ENCODE measurements at regions of chr17 and their contacts with region 1.

Region 1: DNA sequence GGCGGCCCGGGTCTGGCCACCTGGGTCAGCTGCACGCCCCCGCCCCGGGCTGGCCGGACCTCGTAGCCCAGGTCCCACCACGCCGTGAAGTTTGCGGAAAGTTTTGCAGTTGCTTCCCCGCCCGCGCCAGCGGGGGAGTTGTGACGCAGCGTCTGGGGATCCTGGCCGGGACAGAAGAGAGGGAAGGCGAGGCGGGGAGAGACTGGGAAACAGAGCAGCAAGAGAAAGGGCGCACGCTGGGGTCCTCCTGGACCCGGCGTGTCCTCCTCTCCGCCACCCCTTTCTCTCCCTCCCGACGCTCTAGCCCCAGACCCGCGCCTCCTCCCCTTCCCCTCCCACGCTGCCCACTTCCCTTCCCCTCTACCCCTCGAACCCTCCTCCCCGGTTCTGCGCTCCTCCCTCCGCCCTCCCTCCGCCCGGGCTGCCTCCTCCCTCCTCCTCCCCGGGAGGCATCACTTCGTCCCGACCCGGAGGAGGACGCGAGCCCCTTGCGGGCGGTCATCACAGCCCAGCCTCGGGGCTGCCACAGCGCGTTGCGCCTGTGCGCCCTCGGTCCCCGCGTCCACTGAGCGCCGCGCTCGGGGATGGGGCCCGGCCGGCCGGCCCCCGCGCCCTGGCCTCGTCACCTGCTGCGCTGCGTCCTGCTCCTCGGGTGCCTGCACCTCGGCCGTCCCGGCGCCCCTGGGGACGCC is at the start of gene MRC2:
- DNase-seq: peak in 1 of 2 donors; percentile 90
- H3K4me3 ChIP-seq: peak within 1 kb of the TSS; percentile 68 to 78
- H3K27ac ChIP-seq: peak within 1 kb of the TSS; percentile 83 to 98
- H3K4me1 ChIP-seq: peaks cover 3 to 13% of the 10 kb centered on the region in 2 donors
- H3K27me3 ChIP-seq: no peaks in the 10 kb centered on the region
- CTCF ChIP-seq: no peak
- total RNA-seq, gene MRC2: 147 TPM

Region 2: GRCh38 chr17:62637809-62638208 is 10.4 kb after region 1 on chr17:
- intact Hi-C with region 1: no loop called
- DNase-seq: no peak
- H3K4me3 ChIP-seq: no peak overlapping the region
- H3K27ac ChIP-seq: no peak overlapping the region
- H3K4me1 ChIP-seq: peaks cover 2 to 12% of the 10 kb centered on the region in 2 donors
- H3K27me3 ChIP-seq: no peaks in the 10 kb centered on the region
- CTCF ChIP-seq: no peak

Region 3: GRCh38 chr17:62652251-62653001 is 25.1 kb after region 1 on chr17:
- intact Hi-C with region 1: loop called (anchors 1 kb)
- DNase-seq: peak; percentile 42 to 90
- H3K4me3 ChIP-seq: peak overlapping the region; percentile 62 to 69
- H3K27ac ChIP-seq: peak overlapping the region; percentile 67 to 72
- H3K4me1 ChIP-seq: peaks cover 14 to 29% of the 10 kb centered on the region in 2 donors
- H3K27me3 ChIP-seq: no peaks in the 10 kb centered on the region
- CTCF ChIP-seq: no peak

Region 4: GRCh38 chr17:62680541-62681052 is 53.2 kb after region 1 on chr17:
- intact Hi-C with region 1: loop called (anchors 5 kb)
- DNase-seq: no peak
- H3K4me3 ChIP-seq: no peak overlapping the region
- H3K27ac ChIP-seq: peak overlapping the region in 1 of 2 donors; percentile 50
- H3K4me1 ChIP-seq: no peaks in the 10 kb centered on the region
- H3K27me3 ChIP-seq: no peaks in the 10 kb centered on the region
- CTCF ChIP-seq: peak in 1 of 3 experiments; percentile 27

Region 5: DNA sequence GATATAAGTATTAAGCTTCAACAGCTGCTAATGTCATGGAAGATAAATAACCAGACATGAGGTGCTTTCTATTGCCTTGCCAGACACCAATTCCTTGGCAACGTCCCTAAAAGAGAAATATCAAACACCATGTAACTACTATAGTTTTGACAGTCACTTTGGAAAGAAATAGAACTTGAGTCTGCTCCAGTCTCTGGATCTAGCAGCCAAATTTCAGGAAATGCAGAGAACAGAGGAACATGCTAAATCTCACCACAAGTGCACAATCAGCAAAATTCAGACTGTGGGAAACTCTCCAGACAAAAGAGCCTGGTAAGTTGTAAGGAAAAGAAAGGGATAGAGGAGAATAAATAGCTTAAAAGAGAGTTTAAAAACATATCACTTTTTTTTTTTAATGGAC is 310.2 kb after region 1 on chr17:
- intact Hi-C with region 1: no loop called
- DNase-seq: no peak
- H3K4me3 ChIP-seq: no peak overlapping the region
- H3K27ac ChIP-seq: no peak overlapping the region
- H3K4me1 ChIP-seq: no peaks in the 10 kb centered on the region
- H3K27me3 ChIP-seq: no peaks in the 10 kb centered on the region
- CTCF ChIP-seq: no peak

Measured in ascending aorta (tissue), 2 donors.